ENCODE measurements at regions of chr12 and their contacts with region 1.

Region 1: GRCh38 chr12:57063991-57064685 is 14.2 kb upstream of the MYO1A start:
- DNase-seq: peak; percentile 86
- ATAC-seq: peak; percentile 83
- H3K4me3 Mint-ChIP-seq: peak overlapping the region; percentile 67
- H3K27ac Mint-ChIP-seq: peak overlapping the region; percentile 90
- H3K4me1 Mint-ChIP-seq: peaks cover 63% of the 10 kb centered on the region
- H3K27me3 Mint-ChIP-seq: no peaks in the 10 kb centered on the region
- CTCF ChIP-seq: no peak

Region 2: GRCh38 chr12:57012600-57013465 is 51.3 kb before region 1 on chr12:
- CTCF ChIA-PET with region 1: interaction called, 25 read pairs
- POLR2A ChIA-PET with region 1: interaction called, 7 read pairs
- intact Hi-C with region 1: loop called (anchors 1 kb)
- DNase-seq: no peak
- ATAC-seq: no peak
- H3K4me3 Mint-ChIP-seq: no peak overlapping the region
- H3K27ac Mint-ChIP-seq: no peak overlapping the region
- H3K4me1 Mint-ChIP-seq: peaks cover 23% of the 10 kb centered on the region
- H3K27me3 Mint-ChIP-seq: no peaks in the 10 kb centered on the region
- CTCF ChIP-seq: no peak

Region 3: DNA sequence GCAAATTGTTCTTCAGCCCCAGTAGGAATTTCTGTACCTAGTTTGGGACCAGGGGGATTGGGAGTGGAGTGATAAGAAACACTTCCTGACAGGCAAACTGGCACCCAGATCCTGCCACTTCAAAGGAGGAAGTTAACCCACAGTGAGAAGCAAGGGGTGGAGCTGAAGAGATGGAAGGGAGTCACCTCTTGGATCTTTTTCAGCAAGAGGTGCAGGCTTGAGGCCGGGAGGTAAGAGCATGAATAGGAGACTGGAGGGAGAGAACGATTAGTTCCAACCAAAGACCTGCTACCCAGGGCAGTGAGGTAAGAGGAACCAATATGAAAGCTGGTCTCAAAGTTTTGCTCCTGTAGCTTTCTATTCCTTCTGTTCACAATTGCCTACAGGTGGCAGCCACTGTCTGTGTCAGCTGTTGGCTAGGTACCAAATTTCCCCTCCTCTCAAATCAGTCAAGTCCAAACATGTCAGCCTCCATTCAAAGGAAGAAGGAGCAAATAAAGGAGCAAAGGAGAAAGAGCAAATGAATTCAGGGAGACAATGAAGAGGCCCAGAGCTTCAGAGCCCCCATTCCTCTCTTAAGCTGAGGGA is 32.9 kb before region 1 on chr12:
- CTCF ChIA-PET with region 1: interaction called, 14 read pairs
- POLR2A ChIA-PET with region 1: interaction called, 5 read pairs
- intact Hi-C with region 1: no loop called
- DNase-seq: peak; percentile 39
- ATAC-seq: peak; percentile 42
- H3K4me3 Mint-ChIP-seq: no peak overlapping the region
- H3K27ac Mint-ChIP-seq: peak overlapping the region; percentile 26
- H3K4me1 Mint-ChIP-seq: peaks cover 39% of the 10 kb centered on the region
- H3K27me3 Mint-ChIP-seq: no peaks in the 10 kb centered on the region
- CTCF ChIP-seq: no peak

Region 4: DNA sequence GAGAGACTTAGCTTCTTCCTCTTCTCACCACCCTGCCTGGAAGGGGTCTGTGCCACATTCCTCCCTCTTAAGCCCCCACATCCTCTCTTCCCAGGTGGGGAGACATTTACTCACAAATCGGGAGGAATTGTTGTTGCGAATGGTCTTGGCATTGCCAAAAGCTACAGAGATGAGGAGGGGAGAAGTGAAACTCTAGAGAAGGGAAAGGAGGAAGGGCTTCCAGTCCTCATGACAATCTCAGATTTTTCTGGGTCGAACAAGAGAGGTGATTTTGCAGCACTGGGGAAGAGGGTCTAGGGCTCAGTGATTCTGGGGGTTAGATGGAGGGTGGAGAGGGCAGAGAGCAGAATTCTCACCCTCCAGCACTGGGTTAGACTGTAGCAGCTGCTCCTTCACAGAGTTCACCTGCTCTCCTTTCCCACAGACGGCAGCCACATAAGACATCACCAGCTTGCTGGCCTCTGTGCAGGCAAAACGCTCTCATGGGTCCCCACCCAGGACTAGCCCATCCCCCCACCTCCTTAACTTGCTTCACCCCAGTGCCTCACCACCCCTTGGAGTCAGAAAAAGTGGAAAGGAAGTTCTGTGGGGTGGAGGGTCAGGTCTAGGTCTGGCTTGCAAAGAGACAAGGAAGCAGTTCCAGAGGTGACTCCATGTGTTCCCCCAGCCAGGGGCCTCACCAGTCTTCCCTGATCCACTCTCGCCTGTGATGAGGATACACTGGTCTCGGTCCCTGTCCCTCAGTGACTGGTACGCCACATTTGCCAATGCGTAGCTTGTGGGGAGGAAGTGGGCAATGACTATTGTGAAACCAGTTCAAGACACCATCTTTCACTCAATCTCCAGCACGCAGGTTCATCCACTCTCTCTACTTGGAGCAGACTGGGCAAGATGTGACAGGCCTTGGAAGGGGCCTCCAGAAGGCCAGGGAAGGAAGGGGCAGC is 16.9 kb before region 1 on chr12:
- CTCF ChIA-PET with region 1: interaction called, 66 read pairs
- POLR2A ChIA-PET with region 1: interaction called, 7 read pairs
- intact Hi-C with region 1: no loop called
- DNase-seq: peak; percentile 85
- ATAC-seq: peak; percentile 89
- H3K4me3 Mint-ChIP-seq: peak overlapping the region; percentile 7
- H3K27ac Mint-ChIP-seq: peak overlapping the region; percentile 86
- H3K4me1 Mint-ChIP-seq: peaks cover 40% of the 10 kb centered on the region
- H3K27me3 Mint-ChIP-seq: no peaks in the 10 kb centered on the region
- CTCF ChIP-seq: no peak

Region 5: GRCh38 chr12:57078519-57079404 is 14.6 kb after region 1 on chr12 and contains the start of gene NEMP1:
- CTCF ChIA-PET with region 1: interaction called, 43 read pairs
- POLR2A ChIA-PET with region 1: interaction called, 11 read pairs
- intact Hi-C with region 1: no loop called
- DNase-seq: peak; percentile 98
- ATAC-seq: peak; percentile 96
- H3K4me3 Mint-ChIP-seq: peak within 1 kb of the TSS; percentile 100
- H3K27ac Mint-ChIP-seq: peak within 1 kb of the TSS; percentile 99
- H3K4me1 Mint-ChIP-seq: peaks cover 31% of the 10 kb centered on the region
- H3K27me3 Mint-ChIP-seq: no peaks in the 10 kb centered on the region
- CTCF ChIP-seq: no peak
- total RNA-seq, gene NEMP1: 76.1 to 80.6 TPM

Region 6: DNA sequence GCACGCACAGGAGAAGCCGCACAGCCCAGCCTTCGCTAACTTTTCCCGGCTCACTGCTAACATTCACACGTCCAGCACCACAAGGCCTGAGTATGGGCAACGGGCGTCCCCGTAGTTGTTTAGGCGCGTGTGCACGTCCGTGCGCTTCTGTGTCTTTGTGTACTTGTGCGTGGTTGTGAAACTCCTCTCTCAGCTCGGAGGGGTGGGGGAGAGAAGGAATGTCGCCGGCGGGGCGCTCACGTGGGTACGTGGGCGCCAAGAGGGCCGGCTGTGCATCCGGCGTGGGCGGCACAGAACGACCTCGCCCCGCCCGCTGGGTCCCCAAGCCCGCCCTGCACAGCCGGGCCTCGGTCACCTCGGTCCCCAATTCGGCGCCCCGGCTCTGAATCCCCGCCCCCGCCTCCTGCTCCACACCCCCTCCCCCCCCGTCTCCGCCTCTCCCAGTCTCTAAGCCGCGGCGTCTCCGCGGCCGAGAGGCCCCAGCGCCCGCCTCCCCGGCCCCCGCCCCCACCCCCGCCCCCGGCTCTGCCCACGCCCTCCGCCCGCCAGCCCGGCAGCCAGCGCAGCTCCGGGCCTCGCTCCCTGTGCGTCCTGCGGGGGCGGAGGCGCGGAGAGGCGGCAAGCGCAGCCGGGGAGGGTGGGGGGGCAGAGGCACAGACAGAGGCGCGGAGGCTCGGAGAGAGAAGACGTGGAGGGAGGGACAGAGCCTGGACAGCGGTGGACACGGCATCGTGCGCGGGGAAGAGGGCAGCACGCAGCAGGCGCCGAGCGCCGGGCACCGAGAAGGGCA is 24.5 kb after region 1 on chr12 and contains the start of gene NAB2:
- CTCF ChIA-PET with region 1: interaction called, 193 read pairs
- POLR2A ChIA-PET with region 1: interaction called, 155 read pairs
- intact Hi-C with region 1: loop called (anchors 1 kb)
- DNase-seq: peak; percentile 93
- ATAC-seq: peak; percentile 45
- H3K4me3 Mint-ChIP-seq: peak within 1 kb of the TSS; percentile 90
- H3K27ac Mint-ChIP-seq: peak within 1 kb of the TSS; percentile 97
- H3K4me1 Mint-ChIP-seq: peaks cover 53% of the 10 kb centered on the region
- H3K27me3 Mint-ChIP-seq: no peaks in the 10 kb centered on the region
- CTCF ChIP-seq: no peak
- total RNA-seq, gene NAB2: 69.3 to 70.8 TPM